Activated T-helper 1 cell treated with anti-CD3 and anti-CD28 coated beads, Interleukin-12 subunit alpha, Interleukin-12 subunit beta, Interleukin-2, Interleukin-4 antibody, amounts not matched to agents 30 ng/mL and 10 ng/mL and 1 ng/mL, durations not matched to agents 14 hours and 24 hours and 36 hours (primary cell): ENCODE measurements at regions of chr6 and their contacts with region 1.

Region 1: GRCh38 chr6:135577059-135577538 is 79.6 kb upstream of the AHI1 start:
- DNase-seq: no peak
- H3K4me3 Mint-ChIP-seq: peak overlapping the region; percentile 49
- H3K27ac Mint-ChIP-seq: peak overlapping the region; percentile 97
- H3K4me1 Mint-ChIP-seq: peaks cover 48% of the 10 kb centered on the region
- H3K27me3 Mint-ChIP-seq: no peaks in the 10 kb centered on the region

Region 2: DNA sequence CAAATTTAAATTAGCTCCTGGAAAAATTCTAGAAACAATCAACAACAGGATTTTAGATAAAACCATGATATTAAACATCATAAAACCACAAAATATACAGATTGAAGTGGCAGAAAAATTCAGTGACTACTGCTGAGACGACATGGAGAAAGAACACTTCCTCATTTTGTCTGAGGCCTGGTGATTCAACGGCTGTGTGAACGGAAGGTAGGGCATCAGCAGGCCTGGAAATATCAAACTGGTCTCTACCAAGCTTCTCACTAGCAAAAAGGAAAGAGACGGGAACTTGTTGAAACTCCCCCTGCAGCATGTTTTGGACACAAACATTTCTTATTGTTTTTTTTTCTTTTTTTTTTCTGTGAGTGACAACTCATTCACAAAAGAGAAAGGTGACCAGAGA is 21.5 kb before region 1 on chr6:
- intact Hi-C with region 1: loop called (anchors 2 kb)
- DNase-seq: no peak
- H3K4me3 Mint-ChIP-seq: no peak overlapping the region
- H3K27ac Mint-ChIP-seq: peak overlapping the region; percentile 16
- H3K4me1 Mint-ChIP-seq: peaks cover 34% of the 10 kb centered on the region
- H3K27me3 Mint-ChIP-seq: peaks cover 7% of the 10 kb centered on the region

Region 3: GRCh38 chr6:135604035-135604860 is 27.1 kb after region 1 on chr6:
- intact Hi-C with region 1: loop called (anchors 1 kb)
- DNase-seq: no peak
- H3K4me3 Mint-ChIP-seq: no peak overlapping the region
- H3K27ac Mint-ChIP-seq: peak overlapping the region; percentile 90
- H3K4me1 Mint-ChIP-seq: peaks cover 46% of the 10 kb centered on the region
- H3K27me3 Mint-ChIP-seq: no peaks in the 10 kb centered on the region

Region 4: GRCh38 chr6:135640449-135641111 is 63.5 kb after region 1 on chr6:
- intact Hi-C with region 1: loop called (anchors 1 kb)
- DNase-seq: no peak
- H3K4me3 Mint-ChIP-seq: peak overlapping the region; percentile 38
- H3K27ac Mint-ChIP-seq: peak overlapping the region; percentile 91
- H3K4me1 Mint-ChIP-seq: peaks cover 68% of the 10 kb centered on the region
- H3K27me3 Mint-ChIP-seq: peaks cover 2% of the 10 kb centered on the region

Region 5: DNA sequence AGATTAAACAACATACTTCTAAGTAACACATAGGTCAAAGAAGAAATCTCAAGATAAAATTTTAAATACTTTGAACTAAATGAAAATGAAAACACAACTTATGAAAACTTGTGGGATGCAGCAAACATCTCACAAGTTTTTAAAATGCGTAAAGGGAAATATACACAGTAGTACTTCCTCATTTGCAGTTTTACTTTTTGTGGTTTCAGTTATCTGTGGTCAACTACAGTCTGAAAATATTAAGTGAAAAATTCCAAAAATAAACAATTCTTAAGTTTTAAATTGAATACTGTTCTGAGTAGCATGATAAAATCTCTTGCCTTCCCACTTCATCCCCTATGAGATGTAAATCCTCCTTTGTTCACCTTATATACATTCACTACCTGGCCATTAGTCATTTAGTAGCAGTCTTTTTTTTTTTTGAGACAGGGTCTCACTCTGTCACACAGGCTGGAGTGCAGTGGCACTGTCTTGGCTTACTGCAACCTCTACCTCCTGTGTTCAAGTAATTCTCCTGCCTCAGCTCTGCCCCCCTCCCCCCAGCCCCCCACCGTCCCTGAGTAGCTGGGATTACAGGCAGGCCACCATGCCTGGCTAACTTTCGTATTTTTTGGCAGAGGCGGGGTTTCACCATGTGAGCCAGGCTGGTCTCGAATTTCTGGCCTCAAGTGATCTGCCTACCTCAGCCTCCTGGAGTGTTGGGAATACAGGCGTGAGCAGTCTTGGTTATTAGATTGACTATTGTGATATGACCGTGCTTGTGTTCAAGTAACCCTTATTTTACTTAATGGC is 75.1 kb after region 1 on chr6:
- intact Hi-C with region 1: loop called (anchors 1 kb)
- DNase-seq: no peak
- H3K4me3 Mint-ChIP-seq: peak overlapping the region; percentile 57
- H3K27ac Mint-ChIP-seq: peak overlapping the region; percentile 91
- H3K4me1 Mint-ChIP-seq: peaks cover 44% of the 10 kb centered on the region
- H3K27me3 Mint-ChIP-seq: no peaks in the 10 kb centered on the region

Region 6: DNA sequence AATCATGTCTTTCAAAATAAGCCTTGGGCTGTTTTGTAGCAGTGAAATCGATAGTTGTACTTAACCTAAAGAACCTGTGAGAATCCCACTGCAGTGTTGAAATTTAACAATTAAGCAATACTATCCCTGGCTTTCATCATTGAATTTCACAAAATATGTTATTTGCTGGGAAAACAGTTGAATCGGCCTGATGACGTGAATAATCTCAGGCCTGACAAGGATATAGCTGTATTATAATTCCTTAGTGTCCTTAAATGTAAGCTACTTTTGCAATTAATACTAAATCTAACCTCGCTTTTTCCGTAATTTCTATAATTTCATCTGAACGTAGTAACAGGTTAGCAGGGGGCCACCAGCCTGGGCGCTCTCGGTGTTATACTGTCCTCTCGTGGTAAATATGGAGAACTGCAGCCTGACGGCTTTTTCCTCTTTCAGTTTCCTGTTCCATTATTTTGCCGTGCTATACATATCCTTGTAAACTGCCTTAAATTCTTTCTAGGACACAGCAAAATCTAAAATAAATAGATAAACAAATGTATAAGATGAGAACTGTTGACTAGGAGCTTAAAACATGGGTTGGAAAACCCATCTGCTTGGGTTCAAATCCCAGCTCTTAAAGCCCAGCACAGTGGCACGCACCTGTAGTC is 649.1 kb after region 1 on chr6:
- intact Hi-C with region 1: loop called (anchors 5 kb)
- DNase-seq: peak; percentile 35
- H3K4me3 Mint-ChIP-seq: peak overlapping the region; percentile 0
- H3K27ac Mint-ChIP-seq: peak overlapping the region; percentile 25
- H3K4me1 Mint-ChIP-seq: peaks cover 27% of the 10 kb centered on the region
- H3K27me3 Mint-ChIP-seq: no peaks in the 10 kb centered on the region

Region 7: GRCh38 chr6:136249811-136250685 is 672.9 kb after region 1 on chr6 and contains the start of gene MTFR2:
- intact Hi-C with region 1: loop called (anchors 1 kb)
- DNase-seq: peak; percentile 95
- H3K4me3 Mint-ChIP-seq: peak within 1 kb of the TSS; percentile 98
- H3K27ac Mint-ChIP-seq: peak within 1 kb of the TSS; percentile 92
- H3K4me1 Mint-ChIP-seq: peaks cover 66% of the 10 kb centered on the region
- H3K27me3 Mint-ChIP-seq: no peaks in the 10 kb centered on the region
- total RNA-seq, gene MTFR2: 23.3 and 27.6 TPM in 2 replicates